CD4-positive, alpha-beta memory T cell (primary cell): ENCODE measurements at regions of chr20 and their contacts with region 1.

Region 1: GRCh38 chr20:44217342-44218092 is 6.9 kb upstream of the OSER1 start:
- DNase-seq: peak; percentile 69 to 85 (median 74)
- H3K4me3 ChIP-seq: peak overlapping the region; percentile 46 to 54
- H3K4me3 Mint-ChIP-seq: peak overlapping the region; percentile 78 to 92 (median 90)
- H3K27ac ChIP-seq: peak overlapping the region; percentile 57
- H3K27ac Mint-ChIP-seq: peak overlapping the region; percentile 78 to 95 (median 93)
- H3K4me1 ChIP-seq: peaks cover 52% of the 10 kb centered on the region
- H3K4me1 Mint-ChIP-seq: peaks cover 41 to 68% (median 51%) of the 10 kb centered on the region in 4 donors
- H3K27me3 ChIP-seq: no peaks in the 10 kb centered on the region
- H3K27me3 Mint-ChIP-seq: no peaks in the 10 kb centered on the region

Region 2: DNA sequence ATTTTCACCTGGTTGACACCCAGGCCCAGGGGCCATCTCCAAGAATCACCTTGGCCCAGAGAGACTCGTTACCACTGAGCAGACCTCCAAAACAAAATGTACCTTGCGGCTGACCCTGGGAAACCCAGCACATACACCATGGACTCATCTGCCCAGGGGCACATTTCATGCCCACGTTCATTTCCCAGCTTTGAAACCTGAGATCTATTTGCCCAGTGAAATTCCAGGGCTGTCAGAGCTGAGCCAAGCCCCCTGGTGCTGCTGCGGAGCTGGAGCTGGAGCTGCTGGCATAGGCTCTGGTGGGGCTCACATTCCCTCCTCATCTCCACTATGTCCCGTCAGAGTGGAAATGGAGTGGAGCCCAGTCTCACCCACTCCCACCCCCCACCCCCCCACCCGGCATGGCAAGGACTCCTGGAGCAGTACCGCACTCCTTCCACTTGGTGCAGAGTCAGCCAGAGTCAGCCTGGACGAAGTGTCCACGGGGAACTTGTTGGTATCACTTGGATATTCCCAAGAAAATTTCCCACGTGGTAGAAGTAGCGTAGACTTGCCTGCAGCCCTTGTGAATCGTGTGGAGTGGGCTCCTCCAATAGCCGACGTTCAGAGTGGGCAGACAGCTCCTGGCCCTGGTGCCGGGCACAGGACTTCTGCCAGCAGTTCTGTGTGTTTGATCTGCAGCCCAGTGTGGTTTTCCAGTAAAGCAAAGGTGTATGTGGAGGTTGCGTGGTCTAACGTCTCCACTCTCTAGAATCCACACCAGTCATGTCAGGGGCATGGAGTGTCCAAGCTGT is 11.1 kb after region 1 on chr20:
- CTCF ChIA-PET with region 1: interaction called, 14 read pairs
- POLR2A ChIA-PET with region 1: interaction called, 5 read pairs
- intact Hi-C with region 1: no loop called
- DNase-seq: no peak
- H3K4me3 ChIP-seq: no peak overlapping the region
- H3K4me3 Mint-ChIP-seq: no peak overlapping the region
- H3K27ac ChIP-seq: no peak overlapping the region
- H3K27ac Mint-ChIP-seq: peak overlapping the region in 2 of 7 donors; percentile 63 to 83
- H3K4me1 ChIP-seq: no peaks in the 10 kb centered on the region
- H3K4me1 Mint-ChIP-seq: peaks cover 0 to 2% (median 0%) of the 10 kb centered on the region in 4 donors
- H3K27me3 ChIP-seq: no peaks in the 10 kb centered on the region
- H3K27me3 Mint-ChIP-seq: no peaks in the 10 kb centered on the region

Region 3: GRCh38 chr20:44271915-44272663 is 54.6 kb after region 1 on chr20:
- CTCF ChIA-PET with region 1: interaction called, 44 read pairs
- POLR2A ChIA-PET with region 1: interaction called, 4 read pairs
- intact Hi-C with region 1: loop called (anchors 1 kb)
- DNase-seq: peak in 3 of 5 donors; percentile 2 to 32 (median 6)
- H3K4me3 ChIP-seq: no peak overlapping the region
- H3K4me3 Mint-ChIP-seq: no peak overlapping the region
- H3K27ac ChIP-seq: no peak overlapping the region
- H3K27ac Mint-ChIP-seq: no peak overlapping the region
- H3K4me1 ChIP-seq: no peaks in the 10 kb centered on the region
- H3K4me1 Mint-ChIP-seq: peaks cover 0 to 4% (median 0%) of the 10 kb centered on the region in 4 donors
- H3K27me3 ChIP-seq: no peaks in the 10 kb centered on the region
- H3K27me3 Mint-ChIP-seq: no peaks in the 10 kb centered on the region

Region 4: GRCh38 chr20:44319756-44320422 is 102.4 kb after region 1 on chr20:
- CTCF ChIA-PET with region 1: interaction called, 669 read pairs
- POLR2A ChIA-PET with region 1: interaction called, 173 read pairs
- intact Hi-C with region 1: no loop called
- DNase-seq: no peak
- H3K4me3 ChIP-seq: no peak overlapping the region
- H3K4me3 Mint-ChIP-seq: no peak overlapping the region
- H3K27ac ChIP-seq: no peak overlapping the region
- H3K27ac Mint-ChIP-seq: no peak overlapping the region
- H3K4me1 ChIP-seq: no peaks in the 10 kb centered on the region
- H3K4me1 Mint-ChIP-seq: no peaks in the 10 kb centered on the region
- H3K27me3 ChIP-seq: no peaks in the 10 kb centered on the region
- H3K27me3 Mint-ChIP-seq: peaks cover 3 to 7% of the 10 kb centered on the region in 2 donors

Region 5: DNA sequence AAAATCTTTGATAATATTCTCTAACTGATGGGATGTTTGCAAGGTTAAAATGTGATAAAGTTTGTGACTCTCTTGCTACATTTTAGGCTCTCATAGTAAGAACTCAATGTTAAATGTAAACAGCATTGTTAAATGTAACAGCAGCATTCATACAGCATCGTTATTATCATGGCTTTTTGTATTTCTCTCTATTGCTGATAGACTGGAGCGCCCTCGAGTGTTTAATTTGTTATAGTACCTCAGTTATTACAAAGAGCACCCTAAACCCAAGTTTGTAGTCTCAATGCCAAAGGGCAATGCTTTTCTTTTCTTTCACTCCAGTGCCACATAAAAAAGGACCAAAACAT is 243.3 kb after region 1 on chr20:
- CTCF ChIA-PET with region 1: interaction called, 17 read pairs
- POLR2A ChIA-PET with region 1: no interaction called
- intact Hi-C with region 1: loop called (anchors 1 kb)
- DNase-seq: peak in 3 of 5 donors; percentile 6 to 9 (median 9)
- H3K4me3 ChIP-seq: no peak overlapping the region
- H3K4me3 Mint-ChIP-seq: no peak overlapping the region
- H3K27ac ChIP-seq: no peak overlapping the region
- H3K27ac Mint-ChIP-seq: no peak overlapping the region
- H3K4me1 ChIP-seq: no peaks in the 10 kb centered on the region
- H3K4me1 Mint-ChIP-seq: no peaks in the 10 kb centered on the region
- H3K27me3 ChIP-seq: no peaks in the 10 kb centered on the region
- H3K27me3 Mint-ChIP-seq: no peaks in the 10 kb centered on the region

Region 6: DNA sequence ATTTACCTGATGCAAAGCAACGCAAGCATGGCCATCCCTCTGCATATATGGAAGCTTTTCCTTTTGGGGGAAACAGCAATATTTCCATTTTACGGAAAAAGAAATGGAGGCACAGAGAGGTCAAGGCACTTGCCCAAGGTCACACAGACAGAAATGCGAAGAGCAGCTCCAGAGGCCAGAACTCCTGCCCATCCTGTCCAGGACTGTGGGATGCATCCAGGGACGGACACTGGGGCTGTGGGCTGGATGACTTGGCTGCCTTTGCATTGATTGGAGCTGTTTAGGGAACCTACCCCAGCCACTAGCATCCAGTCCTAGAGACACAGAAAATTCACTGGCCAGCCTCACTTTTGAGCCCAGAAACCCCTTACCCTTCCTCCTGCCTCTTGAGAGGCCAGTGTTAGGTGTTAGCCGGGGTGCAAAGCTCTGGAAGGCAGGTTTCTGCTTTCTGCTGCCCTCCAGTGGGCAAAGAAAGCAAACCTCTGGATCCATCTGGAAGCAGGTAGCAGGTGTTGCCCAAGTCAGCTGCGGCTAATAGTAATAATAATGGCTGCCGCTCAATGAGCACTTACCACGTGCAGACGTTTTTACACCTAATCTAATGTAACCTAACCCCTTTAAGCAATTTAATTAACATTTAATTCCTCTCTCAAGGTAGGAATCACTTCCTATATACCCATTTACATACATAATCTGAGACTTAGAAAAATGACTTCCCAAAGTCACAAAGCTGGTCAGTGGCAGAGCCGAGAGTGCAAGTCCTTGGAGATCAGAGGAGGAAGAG is 465.9 kb after region 1 on chr20:
- CTCF ChIA-PET with region 1: interaction called, 51 read pairs
- POLR2A ChIA-PET with region 1: interaction called, 3 read pairs
- intact Hi-C with region 1: no loop called
- DNase-seq: peak; percentile 45 to 68 (median 53)
- H3K4me3 ChIP-seq: no peak overlapping the region
- H3K4me3 Mint-ChIP-seq: no peak overlapping the region
- H3K27ac ChIP-seq: no peak overlapping the region
- H3K27ac Mint-ChIP-seq: peak overlapping the region in 2 of 7 donors; percentile 2 to 10
- H3K4me1 ChIP-seq: peaks cover 8% of the 10 kb centered on the region
- H3K4me1 Mint-ChIP-seq: peaks cover 0 to 15% (median 7%) of the 10 kb centered on the region in 4 donors
- H3K27me3 ChIP-seq: no peaks in the 10 kb centered on the region
- H3K27me3 Mint-ChIP-seq: peaks cover 4 to 8% of the 10 kb centered on the region in 2 donors